B cell (primary cell): ENCODE measurements at regions of chr12 and their contacts with region 1.

Region 1: DNA sequence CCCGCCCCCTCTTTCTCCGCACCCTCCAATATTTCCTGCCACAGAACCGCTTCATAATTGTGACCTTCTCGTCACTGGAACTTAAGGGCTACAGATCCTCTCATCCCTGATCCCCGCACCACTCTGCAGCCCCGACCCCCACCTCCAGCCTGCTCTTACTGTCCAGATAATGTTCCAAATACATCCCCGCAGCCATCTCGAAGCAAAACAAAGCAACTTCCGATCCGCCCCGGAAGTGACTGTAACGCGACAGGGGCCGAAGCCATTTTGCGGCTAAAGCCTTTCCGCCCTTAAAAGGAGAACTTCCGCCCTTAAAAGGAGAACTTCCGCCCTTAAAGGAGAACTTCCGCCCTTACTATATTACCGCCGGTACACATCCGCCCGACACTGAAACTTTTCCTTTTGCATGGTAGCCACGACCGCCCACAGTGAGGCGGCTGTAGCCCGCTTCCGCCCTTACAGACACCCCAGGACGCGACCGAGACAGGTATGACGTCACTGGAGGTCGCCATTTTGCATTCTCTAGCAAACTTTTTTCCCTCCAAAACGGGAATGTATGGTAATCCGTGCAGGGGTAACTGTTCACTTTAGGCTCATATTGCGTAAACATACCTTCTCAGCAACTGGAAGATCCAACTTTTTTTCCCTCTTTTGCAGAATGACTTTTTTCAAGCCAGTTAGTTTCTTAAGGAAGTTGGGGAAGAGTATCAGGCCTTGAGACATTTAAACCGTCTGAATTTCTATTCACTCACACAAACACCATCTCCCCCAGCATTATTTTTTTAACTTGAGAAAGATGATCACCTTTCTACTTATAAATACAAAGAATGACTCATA is at the start of gene ING4:
- DNase-seq: peak; percentile 99
- ATAC-seq: peak; percentile 98
- H3K4me3 ChIP-seq: peak within 1 kb of the TSS; percentile 62 to 94 (median 90)
- H3K4me3 Mint-ChIP-seq: peak within 1 kb of the TSS; percentile 93
- H3K27ac ChIP-seq: peak within 1 kb of the TSS; percentile 64 to 91
- H3K27ac Mint-ChIP-seq: peak within 1 kb of the TSS; percentile 92
- H3K4me1 ChIP-seq: peaks cover 15 to 19% of the 10 kb centered on the region in 2 donors
- H3K4me1 Mint-ChIP-seq: peaks cover 27% of the 10 kb centered on the region
- H3K27me3 ChIP-seq: no peaks in the 10 kb centered on the region
- H3K27me3 Mint-ChIP-seq: no peaks in the 10 kb centered on the region
- CTCF ChIP-seq: no peak
- total RNA-seq, gene ING4: 81.1 TPM in 2 replicates

Region 2: GRCh38 chr12:6554168-6555017 is 108.7 kb before region 1 on chr12:
- CTCF ChIA-PET with region 1: no interaction called
- POLR2A ChIA-PET with region 1: no interaction called
- intact Hi-C with region 1: loop called (anchors 1 kb)
- DNase-seq: peak; percentile 82
- ATAC-seq: peak; percentile 70
- H3K4me3 ChIP-seq: peak overlapping the region in 4 of 5 experiments; percentile 52 to 93 (median 84)
- H3K4me3 Mint-ChIP-seq: peak overlapping the region; percentile 89
- H3K27ac ChIP-seq: no peak overlapping the region
- H3K27ac Mint-ChIP-seq: peak overlapping the region; percentile 67
- H3K4me1 ChIP-seq: peaks cover 12 to 38% of the 10 kb centered on the region in 2 donors
- H3K4me1 Mint-ChIP-seq: peaks cover 36% of the 10 kb centered on the region
- H3K27me3 ChIP-seq: no peaks in the 10 kb centered on the region
- H3K27me3 Mint-ChIP-seq: no peaks in the 10 kb centered on the region
- CTCF ChIP-seq: peak; percentile 81

Region 3: GRCh38 chr12:6607751-6608591 is 55.2 kb before region 1 on chr12:
- CTCF ChIA-PET with region 1: no interaction called
- POLR2A ChIA-PET with region 1: interaction called, 4 read pairs
- intact Hi-C with region 1: loop called (anchors 1 kb)
- DNase-seq: peak; percentile 90
- ATAC-seq: peak; percentile 20
- H3K4me3 ChIP-seq: no peak overlapping the region
- H3K4me3 Mint-ChIP-seq: no peak overlapping the region
- H3K27ac ChIP-seq: peak overlapping the region; percentile 90 to 95
- H3K27ac Mint-ChIP-seq: no peak overlapping the region
- H3K4me1 ChIP-seq: peaks cover 56 to 63% of the 10 kb centered on the region in 2 donors
- H3K4me1 Mint-ChIP-seq: peaks cover 58% of the 10 kb centered on the region
- H3K27me3 ChIP-seq: no peaks in the 10 kb centered on the region
- H3K27me3 Mint-ChIP-seq: no peaks in the 10 kb centered on the region
- CTCF ChIP-seq: no peak

Region 4: DNA sequence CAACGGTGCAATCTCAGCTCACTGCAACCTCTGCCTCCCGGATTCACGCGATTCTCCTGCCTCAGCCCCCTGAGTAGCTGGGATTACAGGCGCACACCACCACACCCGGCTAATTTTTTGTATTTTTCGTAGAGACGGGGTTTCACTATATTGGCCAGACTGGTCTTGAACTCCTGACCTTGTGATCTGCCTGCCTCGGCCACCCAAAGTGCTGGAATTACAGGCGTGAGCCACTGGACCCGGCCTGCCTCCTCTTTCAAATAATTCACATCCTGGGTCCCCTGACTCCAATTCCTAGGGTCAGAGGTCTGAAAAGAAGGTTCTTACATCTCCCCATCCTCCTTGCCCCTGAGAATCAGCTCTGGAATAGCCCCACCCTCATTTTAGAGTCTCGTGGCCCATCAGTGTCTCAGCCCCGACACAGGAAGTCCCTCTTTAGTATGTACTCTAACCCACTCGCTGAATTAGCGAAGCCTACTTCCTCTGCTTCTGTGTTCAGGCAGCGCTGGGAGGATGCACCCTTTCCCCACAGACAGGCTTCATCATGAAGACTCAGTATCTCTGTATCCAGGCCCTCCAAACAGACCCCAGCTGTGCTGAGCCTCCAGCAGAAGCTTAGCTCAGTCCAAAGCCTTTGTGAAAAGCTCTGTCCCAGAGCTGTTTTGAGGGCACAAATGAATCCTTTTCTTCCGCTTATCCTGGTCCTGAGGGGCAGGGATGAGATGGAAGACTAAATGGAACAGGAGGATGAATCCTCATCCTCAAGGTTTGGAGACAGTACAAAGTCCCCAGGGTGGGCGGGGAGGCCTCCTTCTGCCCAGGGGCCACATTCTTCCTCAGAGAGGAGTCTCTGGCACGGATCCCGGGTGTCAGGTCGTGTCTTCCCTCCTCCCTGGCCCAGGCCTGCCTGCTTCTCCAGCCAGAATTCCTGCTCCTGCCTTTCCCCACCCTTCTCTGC is 30.8 kb before region 1 on chr12:
- CTCF ChIA-PET with region 1: interaction called, 3 read pairs
- POLR2A ChIA-PET with region 1: interaction called, 9 read pairs
- intact Hi-C with region 1: loop called (anchors 1 kb)
- DNase-seq: peak; percentile 83
- ATAC-seq: peak; percentile 44
- H3K4me3 ChIP-seq: peak overlapping the region; percentile 12 to 70 (median 55)
- H3K4me3 Mint-ChIP-seq: peak overlapping the region; percentile 97
- H3K27ac ChIP-seq: peak overlapping the region; percentile 85 to 86
- H3K27ac Mint-ChIP-seq: peak overlapping the region; percentile 99
- H3K4me1 ChIP-seq: peaks cover 66 to 88% of the 10 kb centered on the region in 2 donors
- H3K4me1 Mint-ChIP-seq: peaks cover 73% of the 10 kb centered on the region
- H3K27me3 ChIP-seq: no peaks in the 10 kb centered on the region
- H3K27me3 Mint-ChIP-seq: no peaks in the 10 kb centered on the region
- CTCF ChIP-seq: no peak

Region 5: DNA sequence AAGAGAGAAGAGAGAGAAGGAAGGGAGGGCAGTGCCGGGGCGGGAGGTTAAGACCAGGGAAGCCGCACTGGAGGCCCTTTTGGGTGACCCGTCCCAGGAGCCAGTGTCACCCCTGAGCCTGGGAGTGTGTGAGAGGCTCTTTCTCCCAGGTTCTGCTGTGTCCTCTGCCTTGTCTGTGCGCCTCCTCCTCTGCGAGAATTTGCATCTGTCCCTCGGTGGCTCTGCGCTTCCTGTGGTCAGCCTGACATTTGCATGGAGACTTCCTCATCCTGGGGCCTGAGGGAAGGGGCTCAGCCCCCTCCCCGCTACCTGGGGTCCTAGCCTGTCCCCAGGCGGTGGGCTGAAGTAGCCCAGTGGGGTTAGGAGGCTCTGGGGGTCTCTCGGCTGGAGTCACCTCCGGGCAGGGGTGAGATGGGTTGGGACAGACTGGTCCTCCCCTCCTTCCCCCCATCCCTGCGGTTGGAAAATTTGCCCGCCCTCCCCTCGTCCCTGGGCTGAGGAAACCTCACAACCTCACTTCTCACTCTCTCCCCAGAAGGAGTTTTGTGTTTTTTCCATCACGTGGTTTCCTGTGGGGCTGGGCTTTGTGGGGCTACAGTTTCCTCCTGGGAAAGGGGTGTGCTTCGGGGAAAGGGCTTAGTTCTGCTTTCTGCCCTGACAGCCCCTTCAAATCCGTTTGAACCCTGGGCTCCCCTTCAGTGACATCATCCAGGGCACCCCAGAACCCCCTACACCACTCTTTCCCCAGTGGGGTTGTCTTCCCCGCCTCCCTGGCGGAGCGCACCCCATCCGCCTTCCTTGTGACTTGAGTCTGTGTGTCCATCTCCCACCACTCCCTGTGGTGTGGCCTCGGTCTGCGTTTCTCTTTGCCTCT is 290.6 kb after region 1 on chr12:
- CTCF ChIA-PET with region 1: no interaction called
- POLR2A ChIA-PET with region 1: interaction called, 10 read pairs
- intact Hi-C with region 1: no loop called
- DNase-seq: peak; percentile 89
- ATAC-seq: peak; percentile 42
- H3K4me3 ChIP-seq: peak overlapping the region; percentile 88 to 98 (median 92)
- H3K4me3 Mint-ChIP-seq: peak overlapping the region; percentile 98
- H3K27ac ChIP-seq: peak overlapping the region; percentile 84 to 99
- H3K27ac Mint-ChIP-seq: peak overlapping the region; percentile 98
- H3K4me1 ChIP-seq: peaks cover 71 to 76% of the 10 kb centered on the region in 2 donors
- H3K4me1 Mint-ChIP-seq: peaks cover 88% of the 10 kb centered on the region
- H3K27me3 ChIP-seq: no peaks in the 10 kb centered on the region
- H3K27me3 Mint-ChIP-seq: no peaks in the 10 kb centered on the region
- CTCF ChIP-seq: no peak